ENCODE measurements at regions of chr7 and their contacts with region 1.

Region 1: DNA sequence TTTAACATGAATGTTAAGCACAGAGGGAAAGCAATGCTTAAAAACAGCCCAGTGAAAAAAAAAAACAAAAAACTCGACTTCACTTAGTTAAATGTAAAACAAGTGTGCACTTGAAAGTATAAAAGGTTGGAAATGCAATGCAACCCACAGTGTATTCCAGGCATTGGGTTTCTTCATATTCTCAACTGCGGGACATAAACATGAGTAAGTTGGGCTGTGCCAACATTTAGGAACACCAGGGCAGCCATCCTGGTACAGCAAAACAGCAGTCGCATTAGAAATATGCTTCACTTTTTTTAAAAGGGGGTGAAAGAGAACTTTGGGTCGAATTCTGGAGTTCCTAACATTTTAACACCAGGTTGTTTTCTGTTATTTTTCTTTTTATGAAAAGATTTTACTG is 937 bp downstream of the STEAP1 start:
- DNase-seq: no peak
- H3K4me3 Mint-ChIP-seq: no peak overlapping the region
- H3K27ac Mint-ChIP-seq: no peak overlapping the region
- H3K4me1 Mint-ChIP-seq: peaks cover 4% of the 10 kb centered on the region
- H3K27me3 Mint-ChIP-seq: peaks cover 29% of the 10 kb centered on the region

Region 2: GRCh38 chr7:90209776-90210175 is 54.6 kb after region 1 on chr7:
- intact Hi-C with region 1: loop called (anchors 10 kb)
- DNase-seq: no peak
- H3K4me3 Mint-ChIP-seq: no peak overlapping the region
- H3K27ac Mint-ChIP-seq: no peak overlapping the region
- H3K4me1 Mint-ChIP-seq: no peaks in the 10 kb centered on the region
- H3K27me3 Mint-ChIP-seq: peaks cover 27% of the 10 kb centered on the region

Region 3: GRCh38 chr7:90244909-90245851 is 90.0 kb after region 1 on chr7 and contains the start of gene CFAP69:
- intact Hi-C with region 1: loop called (anchors 5 kb)
- DNase-seq: peak; percentile 77
- H3K4me3 Mint-ChIP-seq: peak within 1 kb of the TSS; percentile 85
- H3K27ac Mint-ChIP-seq: no peak within 1 kb of the TSS
- H3K4me1 Mint-ChIP-seq: peaks cover 11% of the 10 kb centered on the region
- H3K27me3 Mint-ChIP-seq: peaks cover 41% of the 10 kb centered on the region
- total RNA-seq, gene CFAP69: 0.34 and 0.51 TPM in 2 replicates

Region 4: GRCh38 chr7:90262438-90262837 is 107.2 kb after region 1 on chr7:
- intact Hi-C with region 1: loop called (anchors 1 kb)
- DNase-seq: no peak
- H3K4me3 Mint-ChIP-seq: no peak overlapping the region
- H3K27ac Mint-ChIP-seq: no peak overlapping the region
- H3K4me1 Mint-ChIP-seq: no peaks in the 10 kb centered on the region
- H3K27me3 Mint-ChIP-seq: peaks cover 6% of the 10 kb centered on the region

Region 5: GRCh38 chr7:90298145-90299038 is 143.2 kb after region 1 on chr7:
- intact Hi-C with region 1: loop called (anchors 2 kb)
- DNase-seq: no peak
- H3K4me3 Mint-ChIP-seq: no peak overlapping the region
- H3K27ac Mint-ChIP-seq: no peak overlapping the region
- H3K4me1 Mint-ChIP-seq: no peaks in the 10 kb centered on the region
- H3K27me3 Mint-ChIP-seq: peaks cover 8% of the 10 kb centered on the region

Region 6: DNA sequence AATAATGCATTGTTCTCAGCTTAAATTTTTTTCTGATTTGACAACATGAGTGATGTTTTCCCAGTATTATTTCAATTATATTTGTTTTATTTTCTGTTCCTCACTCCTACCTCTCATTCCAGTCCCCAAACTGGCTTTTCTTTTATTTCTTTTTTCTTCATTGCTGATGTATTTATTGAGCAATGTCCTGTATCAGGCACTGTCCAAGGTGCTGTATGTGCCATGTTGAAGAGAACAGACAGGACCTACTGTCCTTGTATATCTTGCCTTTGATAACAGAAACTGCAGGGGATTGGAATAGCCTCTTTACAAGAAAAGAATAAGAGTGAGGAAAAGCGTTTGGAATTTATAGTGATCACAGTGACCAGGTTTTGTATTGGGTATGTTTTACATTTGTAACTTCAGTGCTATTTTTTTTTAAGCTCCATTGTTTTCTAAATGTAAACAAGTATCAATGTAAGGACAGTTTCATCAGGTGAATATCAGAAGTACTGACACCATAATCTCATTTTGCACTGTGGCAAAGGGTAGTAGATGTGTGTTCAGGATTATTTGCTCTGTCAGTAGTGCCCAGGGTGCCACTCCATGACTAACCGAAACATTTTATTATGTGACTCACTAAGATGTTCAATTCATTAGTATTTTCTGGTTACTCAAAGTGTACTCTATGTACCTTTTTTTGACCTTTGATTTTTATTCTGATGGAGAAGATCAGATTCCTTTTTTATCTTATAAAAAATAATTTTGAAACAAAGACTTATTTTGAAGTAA is 232.4 kb after region 1 on chr7:
- intact Hi-C with region 1: no loop called
- DNase-seq: no peak
- H3K4me3 Mint-ChIP-seq: no peak overlapping the region
- H3K27ac Mint-ChIP-seq: no peak overlapping the region
- H3K4me1 Mint-ChIP-seq: peaks cover 4% of the 10 kb centered on the region
- H3K27me3 Mint-ChIP-seq: no peaks in the 10 kb centered on the region